ENCODE measurements at regions of chr4 and their contacts with region 1.

Region 1: GRCh38 chr4:39004758-39005157 is 27.5 kb downstream of the TMEM156 start:
- DNase-seq: no peak
- H3K4me3 Mint-ChIP-seq: no peak overlapping the region
- H3K27ac Mint-ChIP-seq: peak overlapping the region; percentile 9
- H3K4me1 Mint-ChIP-seq: peaks cover 24% of the 10 kb centered on the region
- H3K27me3 Mint-ChIP-seq: no peaks in the 10 kb centered on the region

Region 2: DNA sequence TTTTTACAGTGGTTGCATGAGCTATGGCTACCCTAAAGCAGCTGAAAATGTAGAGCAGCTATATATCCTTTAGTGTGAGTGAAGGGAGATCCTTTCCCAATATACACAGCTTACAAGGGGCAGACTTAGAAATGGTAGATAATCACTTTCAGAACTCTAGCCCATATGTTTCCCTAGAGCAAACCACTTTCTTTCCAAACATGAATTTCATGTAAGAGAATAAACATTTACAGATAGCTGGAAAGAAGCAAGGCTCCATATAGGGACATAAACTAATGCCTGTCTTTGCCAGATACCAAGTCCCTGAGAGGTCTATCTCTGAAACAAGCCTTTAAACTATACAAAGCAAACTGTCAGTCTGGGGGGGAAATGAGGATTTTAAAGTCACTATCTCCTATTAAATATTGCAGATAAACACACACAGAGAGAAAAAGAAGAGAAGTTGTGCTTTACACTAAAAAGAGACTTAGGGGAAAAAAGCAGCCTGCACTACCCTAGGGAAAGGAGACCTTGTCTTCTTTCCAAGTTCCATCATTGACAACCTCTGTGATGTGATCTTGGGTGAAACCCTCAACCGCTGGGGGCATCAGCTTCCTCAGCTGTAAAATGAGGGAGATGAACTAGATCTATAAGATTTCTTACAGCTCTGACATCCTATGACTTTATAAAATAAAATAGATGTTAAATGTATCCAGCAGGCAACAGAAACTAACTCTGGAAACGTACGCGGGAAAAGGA is 46.1 kb before region 1 on chr4:
- intact Hi-C with region 1: no loop called
- DNase-seq: no peak
- H3K4me3 Mint-ChIP-seq: peak overlapping the region; percentile 46
- H3K27ac Mint-ChIP-seq: peak overlapping the region; percentile 96
- H3K4me1 Mint-ChIP-seq: peaks cover 62% of the 10 kb centered on the region
- H3K27me3 Mint-ChIP-seq: no peaks in the 10 kb centered on the region

Region 3: DNA sequence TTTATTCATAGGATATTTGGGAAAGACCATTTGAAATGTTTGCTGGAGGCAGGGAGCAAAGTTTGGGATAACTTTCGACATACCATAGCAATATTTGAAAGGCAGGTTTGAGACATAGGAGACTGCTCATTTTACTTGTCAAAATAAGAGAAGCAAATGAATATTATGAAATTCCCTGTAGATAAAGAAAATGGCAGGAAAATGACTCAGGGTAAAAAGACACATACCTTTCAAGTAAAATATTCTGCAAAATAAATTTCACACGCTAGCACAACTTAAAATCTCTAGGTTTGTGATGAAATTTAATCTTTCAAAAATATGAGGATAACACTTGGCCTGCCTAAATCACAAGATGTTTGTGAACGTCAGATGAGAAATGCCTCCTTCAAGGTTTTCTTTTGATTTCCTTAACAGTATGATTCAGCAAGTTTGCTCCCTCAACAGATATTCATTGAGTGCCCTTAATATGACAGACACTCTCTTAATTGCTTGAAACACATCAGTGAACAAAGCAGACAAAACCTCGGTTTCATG is 20.9 kb after region 1 on chr4:
- intact Hi-C with region 1: loop called (anchors 2 kb)
- DNase-seq: no peak
- H3K4me3 Mint-ChIP-seq: no peak overlapping the region
- H3K27ac Mint-ChIP-seq: no peak overlapping the region
- H3K4me1 Mint-ChIP-seq: peaks cover 52% of the 10 kb centered on the region
- H3K27me3 Mint-ChIP-seq: no peaks in the 10 kb centered on the region

Region 4: DNA sequence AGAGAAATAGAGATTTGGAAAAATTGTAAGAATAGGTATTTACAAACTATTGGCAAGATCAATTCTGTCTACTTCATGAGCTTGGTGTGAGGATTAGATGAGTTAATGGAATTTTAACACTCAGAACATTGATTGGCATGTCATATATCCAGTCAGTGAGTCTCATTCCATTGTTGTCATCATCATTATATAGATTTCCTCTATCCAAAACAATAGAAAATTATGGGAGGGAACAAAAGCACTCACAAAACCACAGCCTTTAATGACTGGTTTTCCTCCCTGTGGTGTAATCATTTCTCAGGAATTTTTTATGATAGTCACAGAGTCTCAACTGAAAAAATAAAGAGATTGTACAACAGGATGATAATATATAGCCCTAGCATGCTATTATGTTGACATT is 78.4 kb after region 1 on chr4:
- intact Hi-C with region 1: no loop called
- DNase-seq: no peak
- H3K4me3 Mint-ChIP-seq: no peak overlapping the region
- H3K27ac Mint-ChIP-seq: no peak overlapping the region
- H3K4me1 Mint-ChIP-seq: peaks cover 16% of the 10 kb centered on the region
- H3K27me3 Mint-ChIP-seq: no peaks in the 10 kb centered on the region

Region 5: DNA sequence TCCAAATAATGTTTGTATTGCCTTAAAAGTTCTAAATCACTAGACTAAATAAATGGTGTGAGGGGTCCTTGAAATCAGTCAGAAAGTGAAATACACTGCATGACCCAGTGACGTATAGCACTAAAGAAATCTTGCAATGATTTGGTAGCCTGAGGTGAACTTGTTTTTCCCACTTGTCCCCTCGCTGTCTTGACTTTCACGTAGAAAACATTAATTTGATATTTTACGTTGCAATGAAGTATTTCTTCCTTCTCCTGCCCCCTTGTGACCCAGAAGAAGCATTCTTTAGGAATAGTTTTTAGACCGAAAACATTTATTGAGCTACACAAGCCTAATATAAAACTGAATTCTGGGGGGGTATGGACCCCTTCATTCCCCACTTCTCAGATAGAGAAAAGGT is 405.7 kb after region 1 on chr4:
- intact Hi-C with region 1: no loop called
- DNase-seq: no peak
- H3K4me3 Mint-ChIP-seq: no peak overlapping the region
- H3K27ac Mint-ChIP-seq: no peak overlapping the region
- H3K4me1 Mint-ChIP-seq: no peaks in the 10 kb centered on the region
- H3K27me3 Mint-ChIP-seq: peaks cover 8% of the 10 kb centered on the region